SK-N-SH (cell line): ENCODE measurements at regions of chr10 and their contacts with region 1.

Region 1: GRCh38 chr10:104308439-104308903 is 29.8 kb downstream of the ITPRIP start:
- DNase-seq: no peak
- H3K4me3 ChIP-seq: no peak overlapping the region
- H3K27ac ChIP-seq: peak overlapping the region in 1 of 2 experiments; percentile 26; a peak in 1 of 4 replicates
- H3K4me1 ChIP-seq: peaks cover 10 to 19% of the 10 kb centered on the region in 2 experiments; a peak in 3 of 4 replicates
- H3K27me3 ChIP-seq: no peaks in the 10 kb centered on the region
- CTCF ChIP-seq: no peak
- EP300 ChIP-seq: no peak
- RAD21 ChIP-seq: no peak

Region 2: DNA sequence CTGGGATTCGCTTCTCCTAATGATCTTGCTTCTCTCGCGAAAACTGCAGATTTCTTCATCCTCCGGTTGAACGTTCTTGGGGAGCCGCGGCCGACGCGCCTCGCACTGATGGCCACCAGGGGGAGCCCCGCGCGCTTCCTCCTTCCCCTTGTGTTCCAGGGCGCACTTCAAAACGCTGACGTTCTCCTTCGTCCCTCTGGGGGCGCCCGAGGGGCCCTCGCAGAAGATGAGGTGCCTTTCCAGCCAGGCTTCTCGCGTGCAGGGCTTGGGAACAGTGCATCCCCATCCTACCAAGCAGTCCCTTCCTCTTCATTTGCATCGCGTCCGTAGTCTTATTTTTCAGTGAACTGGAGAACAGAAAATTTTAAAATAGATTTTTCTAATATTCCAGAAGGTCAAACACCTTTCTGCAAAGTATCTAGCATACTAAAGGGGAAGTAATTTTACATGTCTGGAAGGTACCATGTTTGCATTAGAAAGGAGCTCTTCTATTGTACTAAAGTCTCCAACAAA is 17.0 kb before region 1 on chr10:
- CTCF ChIA-PET with region 1: interaction called, 101 read pairs
- POLR2A ChIA-PET with region 1: no interaction called
- DNase-seq: peak; percentile 91
- H3K4me3 ChIP-seq: peak overlapping the region; percentile 7 to 46; a peak in 2 of 4 replicates
- H3K27ac ChIP-seq: peak overlapping the region in 1 of 2 experiments; percentile 19; a peak in 1 of 4 replicates
- H3K4me1 ChIP-seq: peaks cover 0 to 2% of the 10 kb centered on the region in 2 experiments; a peak in 1 of 4 replicates
- H3K27me3 ChIP-seq: no peaks in the 10 kb centered on the region
- CTCF ChIP-seq: peak; percentile 99
- EP300 ChIP-seq: no peak; a peak in 1 of 4 replicates
- RAD21 ChIP-seq: peak; percentile 84

Region 3: DNA sequence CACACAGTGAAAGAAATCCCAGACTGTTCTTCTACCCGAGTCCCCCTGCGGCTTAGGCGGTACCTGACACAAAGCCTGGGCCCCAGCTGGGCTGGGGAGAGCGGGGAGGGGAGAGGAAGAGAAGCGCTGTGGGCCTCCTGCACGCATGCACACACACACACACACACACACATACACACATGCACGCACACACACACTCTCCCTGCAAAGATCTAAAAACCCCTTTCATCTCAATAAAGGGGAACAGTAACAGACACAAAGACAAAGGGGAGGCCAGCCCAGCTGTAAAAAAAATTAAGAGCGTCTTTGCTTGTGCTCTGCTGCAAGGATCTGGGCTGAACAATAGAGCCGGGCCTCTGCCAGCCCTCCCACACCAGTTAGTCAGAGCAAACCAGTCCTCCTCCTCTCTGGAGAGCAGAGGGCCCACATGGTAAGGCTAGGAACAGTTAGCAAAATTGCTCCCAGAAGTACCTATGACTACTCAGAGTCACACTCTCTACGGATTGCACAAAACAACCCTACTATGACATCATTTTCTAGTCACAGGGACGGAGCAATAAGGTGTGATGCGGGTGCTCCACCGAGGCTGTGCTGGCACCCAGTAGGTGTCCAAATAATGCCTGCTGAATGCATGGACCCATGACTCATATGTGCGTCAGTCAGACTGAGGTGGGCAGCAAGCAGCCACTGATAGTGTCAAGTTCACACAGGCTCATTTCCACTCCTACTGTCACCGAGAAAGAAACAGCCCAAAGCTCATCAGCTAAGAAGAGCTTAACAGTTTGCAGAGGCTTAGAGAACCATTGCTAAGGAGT is 20.6 kb after region 1 on chr10:
- CTCF ChIA-PET with region 1: interaction called, 38 read pairs
- POLR2A ChIA-PET with region 1: no interaction called
- DNase-seq: no peak
- H3K4me3 ChIP-seq: peak overlapping the region; percentile 0 to 45; a peak in 3 of 4 replicates
- H3K27ac ChIP-seq: peak overlapping the region; percentile 80 to 96
- H3K4me1 ChIP-seq: peaks cover 48 to 63% of the 10 kb centered on the region in 2 experiments
- H3K27me3 ChIP-seq: no peaks in the 10 kb centered on the region
- CTCF ChIP-seq: no peak
- EP300 ChIP-seq: peak in 1 of 2 experiments; percentile 29; a peak in 1 of 4 replicates
- RAD21 ChIP-seq: no peak

Region 4: DNA sequence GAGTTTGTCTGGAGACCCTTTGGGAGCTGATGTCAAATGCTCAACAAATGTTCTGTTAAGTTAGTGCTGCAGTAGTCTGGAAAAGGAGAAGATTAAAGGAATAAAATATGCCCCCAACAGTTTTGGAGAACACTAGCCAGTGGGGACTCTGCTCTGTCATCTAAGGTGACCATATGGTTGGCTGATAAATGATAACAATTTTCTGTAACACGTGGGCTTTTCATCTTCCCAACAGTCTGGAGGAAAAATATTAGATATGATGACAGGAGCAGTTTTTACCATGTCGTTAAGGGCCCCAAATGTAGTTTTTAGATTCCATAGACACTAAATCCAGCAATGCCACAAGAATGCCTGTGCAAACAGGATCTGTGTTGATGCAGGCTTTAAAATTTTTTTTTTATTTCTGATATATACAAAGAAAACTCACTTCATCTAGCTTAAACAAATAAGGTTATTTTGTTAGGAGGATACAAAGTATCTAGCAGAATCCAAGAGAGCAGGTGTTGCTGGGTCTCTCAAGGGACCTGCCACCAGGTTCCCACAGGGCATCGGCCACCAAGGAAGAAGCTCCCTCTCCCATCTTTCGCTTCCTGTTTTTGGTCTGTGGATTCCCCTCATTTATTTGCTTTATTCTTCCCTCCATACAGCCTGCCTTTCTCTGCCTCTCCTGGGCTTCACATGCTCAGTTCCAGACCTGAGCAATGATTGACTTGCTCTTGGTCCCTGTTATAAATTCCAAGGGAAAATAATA is 39.0 kb after region 1 on chr10:
- CTCF ChIA-PET with region 1: interaction called, 152 read pairs
- POLR2A ChIA-PET with region 1: no interaction called
- DNase-seq: no peak
- H3K4me3 ChIP-seq: no peak overlapping the region
- H3K27ac ChIP-seq: no peak overlapping the region
- H3K4me1 ChIP-seq: peaks cover 4 to 8% of the 10 kb centered on the region in 2 experiments; a peak in 3 of 4 replicates
- H3K27me3 ChIP-seq: no peaks in the 10 kb centered on the region
- CTCF ChIP-seq: no peak
- EP300 ChIP-seq: no peak
- RAD21 ChIP-seq: no peak

Region 5: DNA sequence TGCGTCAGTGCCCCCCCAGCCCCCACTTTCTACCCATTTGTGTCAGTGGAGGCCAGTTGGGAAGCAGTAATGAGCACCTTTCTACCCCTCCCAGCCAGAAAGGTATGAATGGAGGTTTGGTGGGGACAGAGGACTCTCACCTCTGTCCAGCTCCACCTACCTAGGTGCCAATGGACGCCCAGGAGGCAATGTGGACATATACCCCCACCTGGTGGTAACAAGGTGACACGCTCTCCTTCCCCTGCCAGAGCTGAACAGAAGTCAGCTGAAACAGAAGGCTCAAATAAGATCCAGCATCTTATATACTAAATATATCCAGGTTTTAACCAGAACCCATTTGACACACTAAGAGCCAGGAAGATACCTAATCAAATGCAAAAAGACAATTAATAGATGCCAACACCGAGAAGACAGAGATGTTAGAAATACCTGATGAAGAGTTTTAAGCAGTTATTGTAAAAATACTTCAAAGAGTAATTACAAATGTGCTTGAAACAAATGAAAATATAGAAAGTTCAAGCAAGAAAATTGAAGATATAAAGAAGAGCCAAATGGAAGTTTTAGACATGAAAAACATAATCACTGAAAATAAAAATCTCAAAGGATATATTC is 314.2 kb after region 1 on chr10:
- CTCF ChIA-PET with region 1: interaction called, 10 read pairs
- POLR2A ChIA-PET with region 1: no interaction called
- DNase-seq: peak; percentile 62
- H3K4me3 ChIP-seq: no peak overlapping the region
- H3K27ac ChIP-seq: no peak overlapping the region
- H3K4me1 ChIP-seq: no peaks in the 10 kb centered on the region
- H3K27me3 ChIP-seq: no peaks in the 10 kb centered on the region; the same call in 1 of the 2 replicates
- CTCF ChIP-seq: peak; percentile 58
- EP300 ChIP-seq: no peak
- RAD21 ChIP-seq: peak; percentile 82